CD4-positive, alpha-beta memory T cell (primary cell): ENCODE measurements at regions of chr19 and their contacts with region 1.

Region 1: GRCh38 chr19:50025024-50025789 is at the start of gene VRK3:
- DNase-seq: peak; percentile 98 to 100 (median 100)
- H3K4me3 ChIP-seq: peak within 1 kb of the TSS; percentile 53 to 98
- H3K4me3 Mint-ChIP-seq: peak within 1 kb of the TSS; percentile 96 to 99 (median 97)
- H3K27ac ChIP-seq: peak within 1 kb of the TSS; percentile 96
- H3K27ac Mint-ChIP-seq: peak within 1 kb of the TSS; percentile 98 to 100 (median 100)
- H3K4me1 ChIP-seq: peaks cover 33% of the 10 kb centered on the region
- H3K4me1 Mint-ChIP-seq: peaks cover 23 to 63% (median 41%) of the 10 kb centered on the region in 4 donors
- H3K27me3 ChIP-seq: no peaks in the 10 kb centered on the region
- H3K27me3 Mint-ChIP-seq: no peaks in the 10 kb centered on the region
- total RNA-seq, gene VRK3: 109 to 114 TPM

Region 2: DNA sequence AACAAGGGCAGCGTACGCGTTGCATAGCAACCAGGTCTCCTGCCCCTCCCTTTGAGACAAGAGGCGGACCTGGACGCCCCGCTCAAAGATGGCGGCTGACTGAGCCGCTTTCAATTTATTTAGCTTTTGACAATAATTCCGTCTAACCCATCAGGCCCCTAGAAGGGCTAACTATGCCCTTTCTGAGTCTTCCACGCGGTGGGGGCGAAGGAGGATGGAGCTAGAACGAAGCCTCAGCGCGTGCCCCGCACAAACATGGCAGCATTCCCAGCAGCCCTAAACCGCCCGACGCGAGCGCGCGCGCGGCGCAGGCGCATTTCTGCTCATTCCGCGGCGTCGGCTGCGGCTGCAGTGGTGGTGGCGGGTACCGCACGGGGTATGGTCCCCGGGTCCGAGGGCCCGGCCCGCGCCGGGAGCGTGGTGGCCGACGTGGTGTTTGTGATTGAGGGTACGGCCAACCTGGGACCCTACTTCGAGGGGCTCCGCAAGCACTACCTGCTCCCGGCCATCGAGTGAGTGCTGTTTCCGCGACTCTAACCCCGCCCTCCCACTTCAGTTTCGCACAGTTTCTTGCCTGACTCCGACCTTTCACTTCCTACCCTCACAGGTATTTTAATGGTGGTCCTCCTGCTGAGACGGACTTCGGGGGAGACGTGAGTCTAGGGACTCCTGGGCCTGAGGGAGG is 207.1 kb before region 1 on chr19 and contains the start of gene MED25:
- CTCF ChIA-PET with region 1: no interaction called
- POLR2A ChIA-PET with region 1: interaction called, 3 read pairs
- intact Hi-C with region 1: loop called (anchors 5 kb)
- DNase-seq: peak; percentile 90 to 96 (median 95)
- H3K4me3 ChIP-seq: peak within 1 kb of the TSS; percentile 64 to 88
- H3K4me3 Mint-ChIP-seq: peak within 1 kb of the TSS; percentile 89 to 99 (median 99)
- H3K27ac ChIP-seq: peak within 1 kb of the TSS; percentile 95
- H3K27ac Mint-ChIP-seq: peak within 1 kb of the TSS; percentile 98 to 100 (median 100)
- H3K4me1 ChIP-seq: peaks cover 33% of the 10 kb centered on the region
- H3K4me1 Mint-ChIP-seq: peaks cover 17 to 54% (median 36%) of the 10 kb centered on the region in 4 donors
- H3K27me3 ChIP-seq: no peaks in the 10 kb centered on the region
- H3K27me3 Mint-ChIP-seq: no peaks in the 10 kb centered on the region
- total RNA-seq, gene MED25: 41.8 to 48.8 TPM

Region 3: GRCh38 chr19:49858031-49858991 is 166.9 kb before region 1 on chr19:
- CTCF ChIA-PET with region 1: no interaction called
- POLR2A ChIA-PET with region 1: no interaction called
- intact Hi-C with region 1: no loop called
- DNase-seq: peak in 1 of 5 donors; percentile 24
- H3K4me3 ChIP-seq: no peak overlapping the region
- H3K4me3 Mint-ChIP-seq: no peak overlapping the region
- H3K27ac ChIP-seq: no peak overlapping the region
- H3K27ac Mint-ChIP-seq: no peak overlapping the region
- H3K4me1 ChIP-seq: peaks cover 6% of the 10 kb centered on the region
- H3K4me1 Mint-ChIP-seq: peaks cover 4 to 10% (median 8%) of the 10 kb centered on the region in 4 donors
- H3K27me3 ChIP-seq: no peaks in the 10 kb centered on the region
- H3K27me3 Mint-ChIP-seq: no peaks in the 10 kb centered on the region

Region 4: DNA sequence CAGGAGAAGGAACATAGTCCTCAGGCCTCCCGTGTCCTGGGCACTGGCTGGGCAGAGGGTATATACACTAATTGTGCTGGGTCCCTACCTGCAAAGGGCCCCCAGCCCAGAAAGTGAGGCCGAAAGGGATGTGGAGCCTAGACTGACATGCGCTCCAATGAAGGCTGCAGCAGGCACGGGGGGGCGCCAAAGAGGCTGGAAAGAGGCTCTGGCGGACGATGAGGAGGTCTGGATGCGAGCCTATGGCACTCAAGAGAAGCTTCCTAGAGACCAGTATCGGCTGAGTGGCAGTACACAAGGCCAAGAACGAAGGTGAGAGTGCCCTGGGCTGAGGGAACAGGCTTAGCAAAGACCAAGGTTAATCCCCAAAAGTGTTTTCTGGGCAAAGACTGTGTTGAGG is 16.7 kb before region 1 on chr19:
- CTCF ChIA-PET with region 1: no interaction called
- POLR2A ChIA-PET with region 1: no interaction called
- intact Hi-C with region 1: no loop called
- DNase-seq: no peak
- H3K4me3 ChIP-seq: no peak overlapping the region
- H3K4me3 Mint-ChIP-seq: no peak overlapping the region
- H3K27ac ChIP-seq: no peak overlapping the region
- H3K27ac Mint-ChIP-seq: peak overlapping the region in 1 of 7 donors; percentile 36
- H3K4me1 ChIP-seq: peaks cover 17% of the 10 kb centered on the region
- H3K4me1 Mint-ChIP-seq: peaks cover 7 to 18% (median 11%) of the 10 kb centered on the region in 4 donors
- H3K27me3 ChIP-seq: no peaks in the 10 kb centered on the region
- H3K27me3 Mint-ChIP-seq: no peaks in the 10 kb centered on the region

Region 5: GRCh38 chr19:50050384-50051224 is 25.4 kb after region 1 on chr19:
- CTCF ChIA-PET with region 1: interaction called, 4 read pairs
- POLR2A ChIA-PET with region 1: interaction called, 15 read pairs
- intact Hi-C with region 1: loop called (anchors 1 kb)
- DNase-seq: peak; percentile 81 to 90 (median 86)
- H3K4me3 ChIP-seq: peak overlapping the region; percentile 15 to 66
- H3K4me3 Mint-ChIP-seq: peak overlapping the region; percentile 88 to 97 (median 90)
- H3K27ac ChIP-seq: peak overlapping the region; percentile 76
- H3K27ac Mint-ChIP-seq: peak overlapping the region; percentile 87 to 98 (median 96)
- H3K4me1 ChIP-seq: peaks cover 14% of the 10 kb centered on the region
- H3K4me1 Mint-ChIP-seq: peaks cover 9 to 18% (median 15%) of the 10 kb centered on the region in 4 donors
- H3K27me3 ChIP-seq: no peaks in the 10 kb centered on the region
- H3K27me3 Mint-ChIP-seq: peaks cover 0 to 5% of the 10 kb centered on the region in 2 donors